ENCODE measurements at regions of chr15 and their contacts with region 1.

Region 1: DNA sequence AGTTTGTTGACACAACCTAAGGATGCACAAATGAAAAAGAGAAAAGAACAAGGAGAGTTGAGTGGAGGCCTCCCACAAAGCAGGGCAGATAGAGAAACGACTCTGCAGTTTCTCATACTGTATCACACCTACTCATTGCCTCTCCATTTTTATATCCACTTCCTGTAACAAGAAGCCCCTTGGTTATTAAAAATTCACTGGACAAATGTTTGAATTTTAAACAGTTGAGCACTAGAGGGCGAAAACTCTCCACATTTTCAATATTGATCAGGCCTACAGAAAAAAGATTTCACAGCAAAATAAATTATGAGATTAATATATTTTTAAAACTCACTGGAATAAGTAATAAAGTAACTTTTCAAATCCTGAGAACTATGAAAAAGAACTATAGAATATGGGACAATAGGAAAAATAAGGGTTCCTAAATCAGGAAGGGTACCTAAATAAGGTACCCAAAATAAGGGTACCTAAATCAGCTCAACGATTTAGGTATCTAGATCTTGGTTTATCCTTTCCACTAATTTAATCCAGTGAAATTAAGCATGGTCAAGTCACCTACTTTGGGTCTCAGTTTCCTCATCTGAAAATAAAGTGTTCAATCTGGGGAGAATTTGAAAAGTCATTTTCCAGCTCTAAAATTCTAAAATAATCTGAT is 47.0 kb upstream of the PPIB start:
- DNase-seq: peak; percentile 70
- H3K4me3 ChIP-seq: no peak overlapping the region
- H3K27ac ChIP-seq: peak overlapping the region; percentile 27
- H3K4me1 ChIP-seq: peaks cover 6% of the 10 kb centered on the region
- H3K27me3 ChIP-seq: no peaks in the 10 kb centered on the region
- CTCF ChIP-seq: peak; percentile 68

Region 2: GRCh38 chr15:64274341-64274950 is 64.6 kb after region 1 on chr15:
- CTCF ChIA-PET with region 1: no interaction called
- POLR2A ChIA-PET with region 1: no interaction called
- intact Hi-C with region 1: no loop called
- DNase-seq: peak; percentile 62
- H3K4me3 ChIP-seq: no peak overlapping the region
- H3K27ac ChIP-seq: peak overlapping the region; percentile 34
- H3K4me1 ChIP-seq: no peaks in the 10 kb centered on the region
- H3K27me3 ChIP-seq: no peaks in the 10 kb centered on the region
- CTCF ChIP-seq: no peak

Region 3: GRCh38 chr15:64355944-64356709 is 146.3 kb after region 1 on chr15 and contains the start of gene CSNK1G1:
- CTCF ChIA-PET with region 1: interaction called, 4 read pairs
- POLR2A ChIA-PET with region 1: no interaction called
- intact Hi-C with region 1: loop called (anchors 1 kb)
- DNase-seq: peak; percentile 99
- H3K4me3 ChIP-seq: peak within 1 kb of the TSS; percentile 94
- H3K27ac ChIP-seq: peak within 1 kb of the TSS; percentile 89
- H3K4me1 ChIP-seq: peaks cover 24% of the 10 kb centered on the region
- H3K27me3 ChIP-seq: no peaks in the 10 kb centered on the region
- CTCF ChIP-seq: peak; percentile 61
- total RNA-seq, gene CSNK1G1: 23.1 and 27.4 TPM in 2 replicates

Region 4: GRCh38 chr15:64681424-64682024 is 471.7 kb after region 1 on chr15:
- CTCF ChIA-PET with region 1: no interaction called
- POLR2A ChIA-PET with region 1: no interaction called
- intact Hi-C with region 1: loop called (anchors 10 kb)
- DNase-seq: peak; percentile 81
- H3K4me3 ChIP-seq: no peak overlapping the region
- H3K27ac ChIP-seq: no peak overlapping the region
- H3K4me1 ChIP-seq: no peaks in the 10 kb centered on the region
- H3K27me3 ChIP-seq: no peaks in the 10 kb centered on the region
- CTCF ChIP-seq: peak; percentile 65